ENCODE measurements at regions of chr2 and their contacts with region 1.

Region 1: GRCh38 chr2:197777823-197778407 is 7.2 kb downstream of the BOLL start:
- DNase-seq: peak; percentile 46
- ATAC-seq: no peak
- H3K4me3 ChIP-seq: no peak overlapping the region
- H3K4me3 Mint-ChIP-seq: no peak overlapping the region
- H3K27ac ChIP-seq: no peak overlapping the region
- H3K27ac Mint-ChIP-seq: no peak overlapping the region
- H3K4me1 ChIP-seq: no peaks in the 10 kb centered on the region
- H3K4me1 Mint-ChIP-seq: no peaks in the 10 kb centered on the region
- H3K27me3 ChIP-seq: peaks cover 0 to 8% (median 0%) of the 10 kb centered on the region in 4 experiments
- H3K27me3 Mint-ChIP-seq: peaks cover 20% of the 10 kb centered on the region
- CTCF ChIP-seq: peak; percentile 89

Region 2: GRCh38 chr2:196750982-196751635 is 1026.8 kb before region 1 on chr2:
- CTCF ChIA-PET with region 1: interaction called, 7 read pairs
- POLR2A ChIA-PET with region 1: no interaction called
- intact Hi-C with region 1: loop called (anchors 1 kb)
- DNase-seq: peak; percentile 71
- ATAC-seq: peak; percentile 85
- H3K4me3 ChIP-seq: no peak overlapping the region
- H3K4me3 Mint-ChIP-seq: no peak overlapping the region
- H3K27ac ChIP-seq: no peak overlapping the region
- H3K27ac Mint-ChIP-seq: no peak overlapping the region
- H3K4me1 ChIP-seq: peaks cover 0 to 3% of the 10 kb centered on the region in 2 donors
- H3K4me1 Mint-ChIP-seq: peaks cover 4% of the 10 kb centered on the region
- H3K27me3 ChIP-seq: no peaks in the 10 kb centered on the region
- H3K27me3 Mint-ChIP-seq: no peaks in the 10 kb centered on the region
- CTCF ChIP-seq: peak; percentile 89

Region 3: DNA sequence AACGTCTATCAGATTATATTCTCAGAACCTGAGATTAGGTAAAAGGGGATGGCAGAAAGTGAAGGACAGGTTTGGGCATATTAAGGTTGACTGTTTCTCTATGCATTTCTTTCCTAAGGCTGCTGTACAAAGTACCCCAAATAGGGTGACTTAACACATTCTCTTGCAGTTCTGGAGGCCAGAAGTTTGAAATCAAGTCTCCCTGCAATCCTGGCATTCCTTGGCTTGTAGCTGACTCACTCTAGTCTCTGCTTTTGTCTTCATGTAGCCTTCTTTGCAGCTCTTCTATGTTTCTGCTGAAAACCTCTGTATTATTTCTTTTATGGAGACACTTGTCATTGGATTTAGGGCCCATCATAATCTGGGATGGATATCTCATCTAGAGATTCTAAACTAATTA is 390.7 kb after region 1 on chr2:
- CTCF ChIA-PET with region 1: no interaction called
- POLR2A ChIA-PET with region 1: no interaction called
- intact Hi-C with region 1: no loop called
- DNase-seq: no peak
- ATAC-seq: no peak
- H3K4me3 ChIP-seq: no peak overlapping the region
- H3K4me3 Mint-ChIP-seq: no peak overlapping the region
- H3K27ac ChIP-seq: no peak overlapping the region
- H3K27ac Mint-ChIP-seq: no peak overlapping the region
- H3K4me1 ChIP-seq: no peaks in the 10 kb centered on the region
- H3K4me1 Mint-ChIP-seq: no peaks in the 10 kb centered on the region
- H3K27me3 ChIP-seq: no peaks in the 10 kb centered on the region
- H3K27me3 Mint-ChIP-seq: no peaks in the 10 kb centered on the region
- CTCF ChIP-seq: no peak